CD8-positive, alpha-beta T cell (primary cell): ENCODE measurements at regions of chr6 and their contacts with region 1.

Region 1: GRCh38 chr6:4018172-4018905 is 60.6 kb downstream of the FAM217A start:
- DNase-seq: peak; percentile 92 to 99 (median 96)
- ATAC-seq: peak; percentile 70
- H3K4me3 ChIP-seq: peak overlapping the region; percentile 44 to 74
- H3K4me3 Mint-ChIP-seq: peak overlapping the region; percentile 93
- H3K27ac ChIP-seq: peak overlapping the region; percentile 90 to 91
- H3K27ac Mint-ChIP-seq: peak overlapping the region; percentile 99
- H3K4me1 ChIP-seq: peaks cover 57% of the 10 kb centered on the region
- H3K4me1 Mint-ChIP-seq: peaks cover 74% of the 10 kb centered on the region
- H3K27me3 ChIP-seq: no peaks in the 10 kb centered on the region
- H3K27me3 Mint-ChIP-seq: no peaks in the 10 kb centered on the region
- CTCF ChIP-seq: no peak

Region 2: DNA sequence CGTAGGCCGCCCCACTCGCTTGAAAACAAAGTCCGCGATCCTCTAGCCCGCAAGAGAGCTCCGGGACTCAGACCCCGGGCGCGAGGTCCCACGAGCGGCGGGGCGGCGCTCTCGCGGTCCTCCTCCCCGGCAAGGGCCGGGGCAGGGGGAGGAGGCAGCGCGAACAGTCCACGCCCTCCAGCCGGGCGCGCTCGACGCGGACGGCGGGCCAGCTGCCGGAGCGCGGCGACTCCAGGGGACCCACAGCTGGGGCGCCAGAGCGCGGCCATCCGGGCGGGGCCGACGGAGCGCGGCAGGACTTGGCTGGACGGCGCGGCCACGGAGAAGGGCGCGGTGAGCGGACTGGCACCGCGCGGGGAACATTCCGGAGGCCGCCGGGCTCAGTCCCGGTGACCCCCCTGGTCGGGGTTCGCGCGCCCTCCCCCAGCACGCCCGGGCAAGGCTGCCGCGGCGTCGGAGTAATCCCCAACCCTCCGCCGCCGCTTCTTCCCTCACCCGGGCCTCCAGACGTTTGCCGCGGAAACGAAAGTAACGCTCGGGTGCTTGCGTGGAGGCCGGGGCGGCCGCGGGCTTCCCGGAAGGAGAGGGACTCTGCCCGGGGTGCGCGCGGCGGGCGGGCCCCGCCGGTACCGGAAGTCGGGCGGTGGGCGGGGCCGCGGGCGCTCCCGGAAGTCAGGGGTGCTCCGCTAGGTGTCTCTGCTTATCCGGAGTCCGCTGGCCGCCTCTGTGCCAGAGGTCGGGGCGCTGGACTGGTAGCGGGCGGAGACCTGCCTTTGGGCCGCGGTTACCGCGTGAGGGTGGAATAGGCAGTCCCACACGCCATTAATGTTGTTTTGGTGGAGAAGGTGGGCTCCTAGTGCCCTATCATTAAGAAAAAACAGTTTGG is 949.8 kb before region 1 on chr6 and contains the start of gene RIPK1:
- CTCF ChIA-PET with region 1: no interaction called
- POLR2A ChIA-PET with region 1: interaction called, 4 read pairs
- intact Hi-C with region 1: loop called in 1 of 2 experiments (anchors 5 kb)
- DNase-seq: peak; percentile 85 to 98 (median 93)
- ATAC-seq: peak; percentile 74
- H3K4me3 ChIP-seq: peak within 1 kb of the TSS; percentile 67 to 95
- H3K4me3 Mint-ChIP-seq: peak within 1 kb of the TSS; percentile 98
- H3K27ac ChIP-seq: peak within 1 kb of the TSS; percentile 93 to 96
- H3K27ac Mint-ChIP-seq: peak within 1 kb of the TSS; percentile 99
- H3K4me1 ChIP-seq: peaks cover 39% of the 10 kb centered on the region
- H3K4me1 Mint-ChIP-seq: peaks cover 62% of the 10 kb centered on the region
- H3K27me3 ChIP-seq: no peaks in the 10 kb centered on the region
- H3K27me3 Mint-ChIP-seq: no peaks in the 10 kb centered on the region
- CTCF ChIP-seq: peak; percentile 33
- total RNA-seq, gene RIPK1: 18.6 to 19.7 TPM

Region 3: GRCh38 chr6:3162565-3163247 is 855.6 kb before region 1 on chr6:
- CTCF ChIA-PET with region 1: interaction called, 3 read pairs
- POLR2A ChIA-PET with region 1: no interaction called
- intact Hi-C with region 1: loop called (anchors 1 kb)
- DNase-seq: peak; percentile 12 to 84 (median 63)
- ATAC-seq: peak; percentile 47
- H3K4me3 ChIP-seq: peak overlapping the region; percentile 71 to 79
- H3K4me3 Mint-ChIP-seq: peak overlapping the region; percentile 84
- H3K27ac ChIP-seq: peak overlapping the region in 1 of 2 experiments; percentile 72
- H3K27ac Mint-ChIP-seq: peak overlapping the region; percentile 86
- H3K4me1 ChIP-seq: peaks cover 33% of the 10 kb centered on the region
- H3K4me1 Mint-ChIP-seq: peaks cover 37% of the 10 kb centered on the region
- H3K27me3 ChIP-seq: no peaks in the 10 kb centered on the region
- H3K27me3 Mint-ChIP-seq: no peaks in the 10 kb centered on the region
- CTCF ChIP-seq: no peak

Region 4: DNA sequence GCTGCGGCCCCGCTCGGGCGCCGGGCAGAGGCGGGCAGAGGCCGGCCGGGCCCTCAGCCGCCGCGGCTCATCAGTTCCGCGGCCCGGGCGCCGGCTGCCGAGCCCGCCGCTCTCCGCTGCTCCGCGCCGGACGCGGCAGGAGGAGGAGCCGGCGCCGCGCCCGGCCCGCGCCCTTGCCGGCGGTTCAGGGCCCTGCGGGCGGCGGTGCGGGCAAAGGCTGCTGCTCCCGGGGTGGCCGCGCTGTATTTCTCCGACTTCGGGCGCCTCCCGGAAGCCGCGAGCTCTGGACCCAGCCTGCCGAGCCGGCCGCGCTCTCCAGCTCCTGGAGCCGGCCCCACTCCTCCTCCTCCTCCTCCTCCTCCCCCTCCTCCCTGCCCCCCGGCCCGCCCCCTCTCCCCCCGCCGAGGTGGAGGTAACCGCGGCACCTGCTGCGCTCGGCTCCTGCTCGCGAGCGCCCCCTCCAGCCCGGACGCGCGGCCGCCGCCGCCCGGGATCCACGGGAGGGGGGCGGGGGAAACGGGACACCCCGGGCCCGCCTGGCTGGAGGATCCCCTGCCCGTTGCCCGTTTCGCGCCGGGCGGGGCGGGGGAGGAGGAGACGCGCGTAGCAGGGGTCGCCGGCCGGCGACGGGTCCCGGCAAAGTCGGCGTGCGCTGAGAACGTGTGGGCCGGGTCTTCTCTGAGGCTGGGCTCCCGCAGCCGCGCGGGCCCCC is 561.4 kb before region 1 on chr6 and contains the start of gene SLC22A23:
- CTCF ChIA-PET with region 1: no interaction called
- POLR2A ChIA-PET with region 1: no interaction called
- intact Hi-C with region 1: loop called (anchors 10 kb)
- DNase-seq: peak; percentile 50 to 84 (median 74)
- ATAC-seq: peak; percentile 61
- H3K4me3 ChIP-seq: peak within 1 kb of the TSS; percentile 47 to 52
- H3K4me3 Mint-ChIP-seq: peak within 1 kb of the TSS; percentile 83
- H3K27ac ChIP-seq: no peak within 1 kb of the TSS
- H3K27ac Mint-ChIP-seq: peak within 1 kb of the TSS; percentile 58
- H3K4me1 ChIP-seq: peaks cover 22% of the 10 kb centered on the region
- H3K4me1 Mint-ChIP-seq: peaks cover 6% of the 10 kb centered on the region
- H3K27me3 ChIP-seq: peaks cover 0 to 24% of the 10 kb centered on the region in 2 experiments
- H3K27me3 Mint-ChIP-seq: peaks cover 14% of the 10 kb centered on the region
- CTCF ChIP-seq: peak; percentile 68
- total RNA-seq, gene SLC22A23: 3.4 to 4.8 TPM

Region 5: DNA sequence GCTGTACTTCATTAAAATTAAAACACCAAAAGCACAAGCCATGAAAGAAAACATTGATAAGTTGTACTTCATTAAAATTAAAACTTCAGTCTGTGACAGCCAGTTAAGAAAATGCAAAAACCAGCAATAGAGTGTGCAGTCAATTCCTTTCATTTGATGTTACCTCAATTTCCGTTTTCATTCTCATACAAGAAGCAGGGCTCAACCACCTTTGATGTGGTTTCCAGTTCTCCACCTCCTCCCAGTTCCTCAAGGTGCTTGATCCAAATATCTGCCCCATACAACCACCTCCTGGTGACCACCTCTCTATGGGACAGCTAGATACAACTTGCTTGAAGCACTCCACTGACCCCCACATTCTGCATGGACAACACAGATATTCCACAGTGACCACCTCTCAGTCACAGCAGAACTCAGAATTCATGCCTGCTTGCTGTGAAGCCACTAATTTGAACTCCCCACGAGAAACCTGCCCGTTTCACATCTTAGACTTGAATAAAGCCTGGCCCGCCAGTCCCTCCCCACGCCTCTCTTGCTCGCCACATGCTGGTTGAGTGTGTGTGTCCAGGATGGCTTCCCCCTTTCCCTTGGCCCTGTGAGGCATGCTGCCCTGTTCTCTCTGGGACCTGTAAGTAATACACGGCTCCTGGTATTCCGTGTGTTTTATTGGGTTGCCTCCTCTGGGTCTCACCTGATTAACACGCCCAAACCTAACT is 103.1 kb before region 1 on chr6:
- CTCF ChIA-PET with region 1: no interaction called
- POLR2A ChIA-PET with region 1: no interaction called
- intact Hi-C with region 1: no loop called
- DNase-seq: peak in 6 of 9 experiments; percentile 3 to 64 (median 32)
- ATAC-seq: peak; percentile 58
- H3K4me3 ChIP-seq: no peak overlapping the region
- H3K4me3 Mint-ChIP-seq: peak overlapping the region; percentile 66
- H3K27ac ChIP-seq: no peak overlapping the region
- H3K27ac Mint-ChIP-seq: no peak overlapping the region
- H3K4me1 ChIP-seq: peaks cover 27% of the 10 kb centered on the region
- H3K4me1 Mint-ChIP-seq: peaks cover 28% of the 10 kb centered on the region
- H3K27me3 ChIP-seq: peaks cover 3 to 13% of the 10 kb centered on the region in 2 experiments
- H3K27me3 Mint-ChIP-seq: peaks cover 30% of the 10 kb centered on the region
- CTCF ChIP-seq: no peak

Region 6: DNA sequence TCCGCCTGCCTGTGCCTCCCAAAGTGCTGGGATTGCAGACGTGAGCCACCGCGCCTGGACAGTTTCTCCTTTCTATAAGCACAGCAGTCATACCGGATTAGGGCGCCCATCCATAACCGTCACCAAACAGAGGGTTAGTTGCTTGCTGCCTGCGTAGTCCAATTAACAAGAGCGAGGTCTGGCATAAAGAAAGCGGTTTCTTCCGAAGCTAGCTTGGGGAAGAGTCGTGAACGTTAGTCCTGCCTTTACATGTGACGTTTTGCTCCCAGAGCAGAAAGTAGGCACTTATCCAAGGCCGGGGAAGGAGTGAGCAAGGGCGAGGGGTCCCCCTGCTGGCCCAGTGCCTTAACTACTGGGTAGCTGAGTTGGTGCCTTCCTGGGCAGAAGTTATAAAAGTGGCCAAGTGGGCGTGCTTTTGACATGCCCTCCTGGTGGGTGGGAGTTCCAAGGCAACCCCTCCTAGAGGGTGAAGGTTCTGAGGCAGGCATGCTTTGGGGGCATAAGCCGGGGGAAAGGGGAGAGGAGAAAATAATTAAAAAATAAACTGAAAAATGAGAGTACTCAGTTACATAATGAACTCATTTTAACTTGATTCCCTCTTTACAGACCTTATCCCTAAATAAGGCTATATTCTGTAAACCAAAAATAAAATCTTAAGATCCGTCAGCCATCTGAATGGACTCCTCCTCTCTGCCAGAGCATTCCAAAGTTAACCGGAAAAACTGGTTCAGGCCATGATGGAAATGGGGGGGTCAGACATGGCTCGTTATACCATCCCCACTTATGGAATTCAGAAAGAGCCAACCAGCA is 27.4 kb before region 1 on chr6:
- CTCF ChIA-PET with region 1: interaction called, 4 read pairs
- POLR2A ChIA-PET with region 1: no interaction called
- intact Hi-C with region 1: loop called in 1 of 2 experiments (anchors 2 kb)
- DNase-seq: peak; percentile 42 to 75 (median 71)
- ATAC-seq: peak; percentile 98
- H3K4me3 ChIP-seq: no peak overlapping the region
- H3K4me3 Mint-ChIP-seq: no peak overlapping the region
- H3K27ac ChIP-seq: no peak overlapping the region
- H3K27ac Mint-ChIP-seq: no peak overlapping the region
- H3K4me1 ChIP-seq: no peaks in the 10 kb centered on the region
- H3K4me1 Mint-ChIP-seq: peaks cover 18% of the 10 kb centered on the region
- H3K27me3 ChIP-seq: no peaks in the 10 kb centered on the region
- H3K27me3 Mint-ChIP-seq: no peaks in the 10 kb centered on the region
- CTCF ChIP-seq: peak; percentile 73

Region 7: DNA sequence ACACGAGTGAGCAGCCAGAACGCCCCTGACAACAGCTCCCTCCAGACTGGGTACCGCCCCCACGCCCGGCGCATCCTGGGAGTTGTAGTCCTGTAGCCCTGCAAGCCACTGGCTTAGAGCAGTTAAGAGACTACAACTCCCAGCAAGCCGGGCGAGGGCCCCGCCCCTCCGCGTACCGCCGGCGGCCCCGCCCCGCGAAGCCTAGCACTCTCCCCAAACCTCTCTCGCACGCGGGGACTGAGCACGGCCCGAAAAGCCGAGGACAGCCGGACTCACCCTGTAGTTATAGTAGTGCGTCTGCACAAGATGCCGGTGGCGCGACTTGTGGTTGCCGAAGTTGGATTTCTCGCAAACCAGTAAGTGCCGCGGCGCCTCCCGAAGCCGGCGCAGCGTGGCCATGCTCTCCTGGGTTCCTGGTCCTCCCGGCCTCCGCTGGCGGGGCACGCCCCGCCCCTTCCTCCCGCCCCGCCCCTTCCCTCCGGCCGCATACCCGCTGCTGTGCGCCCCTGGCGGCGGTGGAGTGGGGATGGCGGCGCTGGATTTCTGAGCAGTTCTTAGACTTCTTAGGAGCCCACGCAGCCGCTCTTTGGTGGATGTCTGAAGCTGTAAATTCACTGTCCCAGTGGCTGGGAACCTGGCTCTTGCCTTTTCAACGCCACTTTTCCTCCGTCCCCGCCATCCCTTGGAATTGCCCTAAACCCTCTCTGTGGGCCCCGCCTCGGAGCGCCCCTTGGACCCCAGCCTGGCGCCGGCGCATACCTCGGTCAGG is 985.4 kb after region 1 on chr6 and contains the start of gene RPP40:
- CTCF ChIA-PET with region 1: no interaction called
- POLR2A ChIA-PET with region 1: no interaction called
- intact Hi-C with region 1: loop called in 1 of 2 experiments (anchors 5 kb)
- DNase-seq: peak; percentile 97 to 99 (median 98)
- ATAC-seq: peak; percentile 94
- H3K4me3 ChIP-seq: peak within 1 kb of the TSS; percentile 80 to 95
- H3K4me3 Mint-ChIP-seq: peak within 1 kb of the TSS; percentile 94
- H3K27ac ChIP-seq: peak within 1 kb of the TSS; percentile 79 to 82
- H3K27ac Mint-ChIP-seq: peak within 1 kb of the TSS; percentile 97
- H3K4me1 ChIP-seq: peaks cover 8% of the 10 kb centered on the region
- H3K4me1 Mint-ChIP-seq: peaks cover 13% of the 10 kb centered on the region
- H3K27me3 ChIP-seq: no peaks in the 10 kb centered on the region
- H3K27me3 Mint-ChIP-seq: no peaks in the 10 kb centered on the region
- CTCF ChIP-seq: peak; percentile 84
- total RNA-seq, gene RPP40: 0.94 to 1.2 TPM